HepG2 (cell line): ENCODE measurements at regions of chr11 and their contacts with region 1.

Region 1: GRCh38 chr11:101848262-101848661 is 66.5 kb upstream of the CEP126 start:
- DNase-seq: peak; percentile 20
- ATAC-seq: no peak
- H3K4me3 ChIP-seq: no peak overlapping the region
- H3K27ac ChIP-seq: no peak overlapping the region
- H3K4me1 ChIP-seq: peaks cover 5% of the 10 kb centered on the region; the same call in 1 of the 2 replicates
- H3K27me3 ChIP-seq: no peaks in the 10 kb centered on the region
- CTCF ChIP-seq: no peak
- EP300 ChIP-seq: no peak
- POLR2A ChIP-seq: no peak
- RAD21 ChIP-seq: no peak

Region 2: DNA sequence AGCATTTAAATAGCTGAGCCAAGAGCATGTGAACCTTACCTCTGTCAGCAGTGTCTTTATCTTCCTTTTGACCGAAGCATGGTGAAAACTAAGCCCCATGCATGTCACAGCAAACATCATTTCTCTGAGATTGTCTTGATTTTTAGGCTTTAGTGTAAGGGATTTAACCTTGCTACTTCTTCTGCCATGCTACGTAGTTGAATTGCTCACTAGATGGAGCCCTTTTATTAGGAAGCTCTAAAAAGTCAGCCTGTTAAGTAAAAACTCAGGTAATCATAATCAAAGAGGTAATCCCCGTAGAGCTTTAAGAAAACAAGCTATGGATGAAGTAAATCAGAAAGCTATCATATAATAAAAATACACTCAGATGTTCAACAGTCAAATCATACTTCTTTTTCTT is 868.1 kb before region 1 on chr11:
- CTCF ChIA-PET with region 1: no interaction called
- POLR2A ChIA-PET with region 1: no interaction called
- in situ Hi-C with region 1: no loop called
- intact Hi-C with region 1: loop called (anchors 10 kb)
- DNase-seq: peak; percentile 3
- ATAC-seq: no peak
- H3K4me3 ChIP-seq: no peak overlapping the region
- H3K27ac ChIP-seq: no peak overlapping the region
- H3K4me1 ChIP-seq: no peaks in the 10 kb centered on the region
- H3K27me3 ChIP-seq: no peaks in the 10 kb centered on the region
- CTCF ChIP-seq: 0 out of 2 replicates have a peak, but pooled peaks have one; percentile 20
- EP300 ChIP-seq: no peak
- POLR2A ChIP-seq: no peak
- RAD21 ChIP-seq: no peak

Region 3: GRCh38 chr11:101428918-101429317 is 419.3 kb before region 1 on chr11:
- CTCF ChIA-PET with region 1: interaction called, 5 read pairs
- POLR2A ChIA-PET with region 1: no interaction called
- in situ Hi-C with region 1: no loop called
- intact Hi-C with region 1: loop called (anchors 1 kb)
- DNase-seq: peak; percentile 7
- ATAC-seq: peak; percentile 83
- H3K4me3 ChIP-seq: no peak overlapping the region
- H3K27ac ChIP-seq: no peak overlapping the region
- H3K4me1 ChIP-seq: peaks cover 14% of the 10 kb centered on the region
- H3K27me3 ChIP-seq: no peaks in the 10 kb centered on the region
- CTCF ChIP-seq: peak; percentile 74
- EP300 ChIP-seq: no peak
- POLR2A ChIP-seq: no peak
- RAD21 ChIP-seq: no peak

Region 4: DNA sequence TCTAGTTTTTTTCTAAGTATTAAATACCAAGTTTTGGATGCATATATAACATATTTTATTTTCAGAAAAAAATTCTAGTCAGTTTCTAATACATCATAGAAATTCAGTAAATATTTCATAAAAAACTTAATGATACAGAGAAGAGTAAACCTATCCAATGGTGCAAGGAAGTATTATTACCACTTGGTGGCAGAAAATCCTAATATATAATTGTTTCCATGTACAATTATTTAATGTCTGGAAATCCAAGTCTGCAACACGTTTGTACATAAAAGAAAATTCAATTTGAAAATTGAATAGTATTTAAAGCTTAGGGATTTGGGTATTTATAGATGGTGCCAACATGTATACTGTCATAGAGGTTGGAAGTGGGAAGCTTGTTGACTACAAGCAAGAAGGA is 391.4 kb before region 1 on chr11:
- CTCF ChIA-PET with region 1: interaction called, 9 read pairs
- POLR2A ChIA-PET with region 1: no interaction called
- in situ Hi-C with region 1: loop called (anchors 10 kb)
- intact Hi-C with region 1: loop called (anchors 1 kb)
- DNase-seq: no peak
- ATAC-seq: no peak
- H3K4me3 ChIP-seq: no peak overlapping the region
- H3K27ac ChIP-seq: no peak overlapping the region
- H3K4me1 ChIP-seq: no peaks in the 10 kb centered on the region
- H3K27me3 ChIP-seq: no peaks in the 10 kb centered on the region
- CTCF ChIP-seq: peak; percentile 19; the same call in 1 of the 2 replicates
- EP300 ChIP-seq: no peak
- POLR2A ChIP-seq: no peak
- RAD21 ChIP-seq: no peak

Region 5: GRCh38 chr11:101759771-101760450 is 88.4 kb before region 1 on chr11:
- CTCF ChIA-PET with region 1: no interaction called
- POLR2A ChIA-PET with region 1: no interaction called
- in situ Hi-C with region 1: no loop called
- intact Hi-C with region 1: loop called (anchors 5 kb)
- DNase-seq: peak; percentile 35
- ATAC-seq: peak; percentile 87
- H3K4me3 ChIP-seq: no peak overlapping the region
- H3K27ac ChIP-seq: no peak overlapping the region
- H3K4me1 ChIP-seq: no peaks in the 10 kb centered on the region
- H3K27me3 ChIP-seq: no peaks in the 10 kb centered on the region
- CTCF ChIP-seq: peak; percentile 56
- EP300 ChIP-seq: no peak
- POLR2A ChIP-seq: no peak
- RAD21 ChIP-seq: no peak; the same call in 1 of the 2 replicates

Region 6: GRCh38 chr11:102017026-102017425 is 168.8 kb after region 1 on chr11:
- CTCF ChIA-PET with region 1: no interaction called
- POLR2A ChIA-PET with region 1: no interaction called
- in situ Hi-C with region 1: no loop called
- intact Hi-C with region 1: no loop called
- DNase-seq: no peak
- ATAC-seq: no peak
- H3K4me3 ChIP-seq: no peak overlapping the region
- H3K27ac ChIP-seq: no peak overlapping the region
- H3K4me1 ChIP-seq: peaks cover 11% of the 10 kb centered on the region; the same call in 1 of the 2 replicates
- H3K27me3 ChIP-seq: no peaks in the 10 kb centered on the region
- CTCF ChIP-seq: no peak
- EP300 ChIP-seq: no peak
- POLR2A ChIP-seq: no peak
- RAD21 ChIP-seq: no peak